ENCODE measurements at regions of chr2 and their contacts with region 1.

Region 1: DNA sequence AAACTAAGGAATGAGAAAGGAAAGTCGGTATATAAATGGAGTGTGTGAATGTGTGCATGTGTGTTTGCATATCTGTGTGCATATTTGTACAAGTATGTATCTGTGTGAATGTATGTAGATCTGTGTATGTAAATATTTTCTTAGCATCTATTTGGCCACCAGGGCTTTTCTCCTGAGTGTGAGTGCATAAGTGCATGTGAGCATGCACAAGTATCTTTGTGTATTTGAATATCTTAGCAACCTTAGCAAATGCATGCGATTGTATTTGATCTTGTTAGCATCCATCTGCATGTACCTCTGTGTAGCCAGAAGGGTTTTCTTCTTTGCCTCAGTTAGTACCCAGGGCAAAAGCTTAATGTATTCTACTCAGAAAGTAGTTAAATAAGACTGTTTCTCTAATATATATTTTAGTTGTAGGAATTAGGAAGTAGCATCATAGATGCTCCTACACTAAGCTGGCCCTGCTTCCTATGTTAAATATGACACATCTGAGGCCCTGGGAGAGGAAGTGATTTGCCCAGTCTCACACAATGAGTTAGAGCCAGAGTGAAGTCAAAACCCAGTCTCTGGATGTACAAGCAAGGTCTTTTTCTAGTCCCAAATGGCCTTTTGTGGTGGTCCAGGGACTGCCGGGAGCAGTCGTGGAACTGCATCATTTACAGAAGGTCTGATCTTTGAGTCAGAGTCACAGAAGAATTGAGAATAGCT is 9.2 kb downstream of the FKBP1B start:
- DNase-seq: no peak
- H3K4me3 ChIP-seq: no peak overlapping the region
- H3K27ac ChIP-seq: no peak overlapping the region
- H3K4me1 ChIP-seq: no peaks in the 10 kb centered on the region
- H3K27me3 ChIP-seq: no peaks in the 10 kb centered on the region
- CTCF ChIP-seq: no peak
- EP300 ChIP-seq: no peak
- POLR2A ChIP-seq: no peak
- RAD21 ChIP-seq: no peak

Region 2: DNA sequence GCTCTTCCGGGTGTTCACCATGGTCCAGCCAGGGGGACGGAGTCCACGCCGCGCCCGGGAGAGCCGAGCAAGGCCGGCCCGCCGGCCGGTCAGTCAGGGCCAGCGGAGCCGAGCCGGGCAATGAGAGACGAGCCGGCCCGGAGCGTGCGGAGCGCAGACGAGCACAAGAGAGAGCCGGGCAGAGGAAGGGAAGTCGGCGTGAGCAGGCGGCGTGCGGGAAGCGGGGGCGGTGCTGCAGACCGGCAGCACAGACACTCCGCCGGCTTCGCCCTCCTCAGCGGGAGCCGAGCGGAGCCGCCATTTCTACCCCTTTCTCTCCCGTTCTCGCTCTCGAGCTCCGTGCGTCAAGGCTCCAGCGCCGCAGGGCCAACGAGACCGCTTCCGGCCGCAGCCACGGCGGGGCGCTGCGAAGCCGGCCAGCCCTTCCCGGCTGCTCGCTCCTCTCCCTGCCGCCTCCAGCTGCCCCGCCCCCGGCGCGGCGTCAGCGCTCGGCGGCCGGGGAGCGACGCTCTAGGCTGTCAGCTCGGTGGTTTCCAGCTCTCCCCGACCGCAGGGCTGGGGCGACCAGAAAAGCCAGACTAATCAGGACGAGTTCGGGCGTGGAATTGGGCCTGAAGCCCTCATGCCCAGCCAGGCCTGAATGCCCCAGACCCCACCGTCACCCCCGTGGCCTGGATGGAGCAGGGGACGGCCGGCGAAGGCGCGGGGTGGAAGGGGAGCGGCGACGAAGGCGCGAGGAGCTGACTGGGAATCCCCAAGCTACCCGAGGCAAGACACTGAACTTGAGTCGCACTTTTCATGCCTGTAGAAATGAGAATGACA is 131.8 kb before region 1 on chr2 and contains the start of gene ATAD2B:
- CTCF ChIA-PET with region 1: interaction called, 8 read pairs
- POLR2A ChIA-PET with region 1: interaction called, 10 read pairs
- DNase-seq: peak; percentile 85 to 97
- H3K4me3 ChIP-seq: peak within 1 kb of the TSS; percentile 69 to 90 (median 82)
- H3K27ac ChIP-seq: peak within 1 kb of the TSS; percentile 87
- H3K4me1 ChIP-seq: peaks cover 0 to 2% (median under 1%) of the 10 kb centered on the region in 4 experiments; a peak in 3 of 7 replicates
- H3K27me3 ChIP-seq: no peaks in the 10 kb centered on the region
- CTCF ChIP-seq: peak; percentile 87 to 96 (median 87)
- EP300 ChIP-seq: 0 out of 3 replicates have a peak, but pooled peaks of 1 of the 2 experiments have one; percentile 80
- POLR2A ChIP-seq: peak; percentile 85 to 94
- RAD21 ChIP-seq: peak; percentile 75 to 83
- total RNA-seq, gene ATAD2B: 15.3 and 16.1 TPM in 2 replicates

Region 3: DNA sequence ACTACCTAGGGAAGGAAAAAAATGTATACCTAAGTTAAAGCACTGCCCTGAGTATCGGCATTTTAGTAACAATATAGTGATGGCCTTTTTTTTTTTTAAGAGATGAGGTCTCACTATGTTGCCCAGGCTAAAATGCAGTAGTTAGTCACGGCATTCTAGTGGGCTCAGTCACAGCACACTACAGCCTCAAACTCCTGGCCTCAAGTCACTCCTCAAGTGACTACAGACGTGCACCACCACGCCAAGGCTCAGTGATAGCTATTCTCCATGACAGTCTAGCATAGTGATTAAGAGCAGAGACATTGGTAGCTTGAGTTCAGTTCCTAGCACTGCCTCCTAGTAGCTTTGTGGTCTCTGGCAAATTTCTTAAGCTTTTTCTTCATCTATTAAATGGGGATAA is 90.9 kb before region 1 on chr2:
- CTCF ChIA-PET with region 1: no interaction called
- POLR2A ChIA-PET with region 1: no interaction called
- DNase-seq: no peak
- H3K4me3 ChIP-seq: no peak overlapping the region
- H3K27ac ChIP-seq: no peak overlapping the region
- H3K4me1 ChIP-seq: no peaks in the 10 kb centered on the region
- H3K27me3 ChIP-seq: no peaks in the 10 kb centered on the region
- CTCF ChIP-seq: no peak
- EP300 ChIP-seq: no peak
- POLR2A ChIP-seq: no peak
- RAD21 ChIP-seq: no peak

Region 4: GRCh38 chr2:24021193-24021998 is 37.3 kb before region 1 on chr2:
- CTCF ChIA-PET with region 1: interaction called, 31 read pairs
- POLR2A ChIA-PET with region 1: interaction called, 8 read pairs
- DNase-seq: peak; percentile 43 to 83
- H3K4me3 ChIP-seq: no peak overlapping the region
- H3K27ac ChIP-seq: no peak overlapping the region
- H3K4me1 ChIP-seq: peaks cover 11 to 38% (median 18%) of the 10 kb centered on the region in 4 experiments
- H3K27me3 ChIP-seq: no peaks in the 10 kb centered on the region
- CTCF ChIP-seq: peak in 2 of 3 experiments; percentile 85 to 93; a peak in 3 of 4 replicates
- EP300 ChIP-seq: no peak
- POLR2A ChIP-seq: peak in 1 of 2 experiments; percentile 18; a peak in 1 of 3 replicates
- RAD21 ChIP-seq: peak; percentile 93 to 95

Region 5: GRCh38 chr2:24040531-24040930 is 18.2 kb before region 1 on chr2:
- CTCF ChIA-PET with region 1: interaction called, 23 read pairs
- POLR2A ChIA-PET with region 1: no interaction called
- DNase-seq: no peak
- H3K4me3 ChIP-seq: no peak overlapping the region
- H3K27ac ChIP-seq: no peak overlapping the region
- H3K4me1 ChIP-seq: no peaks in the 10 kb centered on the region
- H3K27me3 ChIP-seq: no peaks in the 10 kb centered on the region
- CTCF ChIP-seq: no peak
- EP300 ChIP-seq: no peak
- POLR2A ChIP-seq: no peak
- RAD21 ChIP-seq: no peak

Region 6: DNA sequence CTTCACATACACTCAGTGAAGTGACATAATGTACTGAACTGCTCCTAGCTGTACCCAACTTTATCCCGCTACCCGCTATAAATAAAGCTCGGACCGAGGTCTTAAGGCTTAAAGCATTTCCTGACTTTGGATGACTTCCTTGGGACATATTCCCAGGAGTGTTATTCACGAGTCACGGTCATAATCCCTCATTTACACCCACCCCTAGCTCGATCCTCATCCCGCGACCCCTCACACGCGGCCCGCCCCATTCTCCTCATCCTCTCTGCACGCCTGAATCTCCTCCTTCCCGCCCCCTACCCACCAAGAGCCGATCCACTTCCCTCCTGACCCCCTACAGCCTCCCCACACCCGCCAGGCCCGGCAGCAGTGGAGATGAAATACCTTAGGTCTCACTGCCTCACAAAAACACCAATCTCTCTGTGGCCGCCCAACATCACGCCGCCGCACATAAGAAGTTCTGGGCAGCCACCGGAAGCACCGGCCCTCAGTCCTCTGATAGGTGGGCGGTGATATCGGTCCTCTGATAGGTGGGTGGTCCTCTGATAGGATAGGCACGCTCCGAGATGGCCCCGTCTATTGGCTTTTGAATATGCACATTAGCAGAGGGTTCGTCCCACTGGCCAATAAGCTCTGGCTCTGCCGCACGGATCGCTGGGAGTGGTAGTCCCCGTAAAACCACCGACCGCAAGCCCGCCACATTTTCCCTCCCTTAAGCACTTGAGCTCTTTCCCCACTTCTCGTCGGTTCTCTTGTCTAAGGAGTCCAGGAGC is 11.6 kb before region 1 on chr2 and contains the start of gene WDCP:
- CTCF ChIA-PET with region 1: interaction called, 27 read pairs
- POLR2A ChIA-PET with region 1: interaction called, 13 read pairs
- DNase-seq: peak; percentile 82 to 94
- H3K4me3 ChIP-seq: peak within 1 kb of the TSS; percentile 73 to 95 (median 84)
- H3K27ac ChIP-seq: peak within 1 kb of the TSS; percentile 53; the same call in 1 of the 2 replicates
- H3K4me1 ChIP-seq: peaks cover 5 to 12% (median 6%) of the 10 kb centered on the region in 4 experiments; a peak in 5 of 7 replicates
- H3K27me3 ChIP-seq: no peaks in the 10 kb centered on the region
- CTCF ChIP-seq: no peak
- EP300 ChIP-seq: no peak
- POLR2A ChIP-seq: peak; percentile 49 to 88
- RAD21 ChIP-seq: no peak
- total RNA-seq, gene WDCP: 37.6 and 40.1 TPM in 2 replicates

Region 7: DNA sequence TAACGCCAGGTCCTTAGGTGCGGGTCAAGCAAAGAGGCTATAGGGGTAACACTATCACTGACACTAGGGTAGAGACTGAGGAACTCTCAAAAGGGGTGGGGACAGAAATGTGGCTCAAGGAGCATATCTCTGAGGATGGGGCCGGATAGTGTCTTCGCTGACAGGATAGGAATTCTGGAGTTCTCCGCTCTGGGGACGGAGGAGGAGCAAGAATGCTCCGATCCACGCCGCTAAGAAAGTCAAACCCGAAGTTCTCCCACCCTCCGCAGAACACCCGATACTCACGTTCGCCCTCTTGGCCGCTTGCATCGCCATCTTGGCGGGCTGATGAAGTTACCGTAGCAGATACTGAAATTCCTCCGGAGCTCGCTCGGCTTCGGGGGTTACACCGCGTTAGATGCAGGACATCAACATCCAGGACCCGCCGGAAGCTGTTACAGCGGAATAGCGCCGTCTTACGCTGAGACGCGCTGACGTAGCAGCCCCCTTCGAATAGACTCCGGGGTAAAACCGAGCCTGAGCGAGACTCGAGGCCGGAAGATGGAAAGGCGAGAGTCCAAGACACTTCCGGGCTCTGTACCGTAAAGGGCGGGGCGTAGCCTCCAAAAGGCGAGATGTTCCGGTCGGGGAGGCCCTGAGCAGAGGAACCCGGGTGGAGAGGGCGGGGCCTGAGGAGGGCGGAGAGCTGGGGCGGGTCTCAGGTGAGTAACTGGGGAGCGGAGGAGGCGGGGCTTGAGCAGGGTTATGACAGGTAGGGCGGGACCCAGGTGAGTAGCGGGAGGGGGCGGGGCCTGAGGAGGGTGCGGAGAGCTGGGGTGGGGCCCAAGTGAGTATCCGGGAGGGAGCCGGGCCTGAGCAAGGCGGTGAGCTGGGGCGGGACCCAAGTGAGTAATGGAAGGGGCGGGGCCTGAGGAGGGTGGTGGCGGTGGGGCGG is 17.5 kb after region 1 on chr2 and contains the start of gene SF3B6:
- CTCF ChIA-PET with region 1: interaction called, 14 read pairs
- POLR2A ChIA-PET with region 1: interaction called, 10 read pairs
- DNase-seq: peak; percentile 100
- H3K4me3 ChIP-seq: peak within 1 kb of the TSS; percentile 74 to 96 (median 94)
- H3K27ac ChIP-seq: peak within 1 kb of the TSS; percentile 87
- H3K4me1 ChIP-seq: peaks cover 0 to 7% (median 2%) of the 10 kb centered on the region in 4 experiments; a peak in 4 of 7 replicates
- H3K27me3 ChIP-seq: no peaks in the 10 kb centered on the region
- CTCF ChIP-seq: no peak
- EP300 ChIP-seq: peak in 1 of 2 experiments; percentile 85; a peak in 1 of 3 replicates
- POLR2A ChIP-seq: peak in 1 of 2 experiments; percentile 89; a peak in 2 of 3 replicates
- RAD21 ChIP-seq: peak in 1 of 2 experiments; percentile 17; a peak in 2 of 4 replicates
- total RNA-seq, gene SF3B6: 126 and 127 TPM in 2 replicates

Region 8: DNA sequence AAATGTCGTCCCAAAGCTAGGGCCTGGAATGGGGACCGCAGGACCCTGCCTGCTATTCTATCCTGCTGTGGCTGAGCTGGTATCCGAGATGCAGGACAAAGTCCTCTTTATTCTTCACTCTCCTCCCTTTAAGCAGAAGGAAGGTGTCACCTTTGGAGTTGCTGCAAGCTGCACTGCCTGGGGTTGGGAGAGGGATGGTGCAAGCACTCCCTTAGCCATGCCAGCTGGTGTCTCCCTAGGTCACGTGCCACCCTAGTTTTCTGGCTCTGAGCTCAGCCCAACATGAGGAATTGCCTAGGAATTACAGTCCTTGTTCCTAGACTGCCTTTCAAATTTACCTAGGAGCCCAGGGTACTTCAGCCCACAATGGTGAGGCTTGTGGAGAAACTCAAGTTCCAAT is 94.8 kb after region 1 on chr2:
- CTCF ChIA-PET with region 1: no interaction called
- POLR2A ChIA-PET with region 1: no interaction called
- DNase-seq: no peak
- H3K4me3 ChIP-seq: no peak overlapping the region
- H3K27ac ChIP-seq: no peak overlapping the region
- H3K4me1 ChIP-seq: no peaks in the 10 kb centered on the region
- H3K27me3 ChIP-seq: no peaks in the 10 kb centered on the region
- CTCF ChIP-seq: no peak
- EP300 ChIP-seq: no peak
- POLR2A ChIP-seq: no peak
- RAD21 ChIP-seq: no peak

Region 9: DNA sequence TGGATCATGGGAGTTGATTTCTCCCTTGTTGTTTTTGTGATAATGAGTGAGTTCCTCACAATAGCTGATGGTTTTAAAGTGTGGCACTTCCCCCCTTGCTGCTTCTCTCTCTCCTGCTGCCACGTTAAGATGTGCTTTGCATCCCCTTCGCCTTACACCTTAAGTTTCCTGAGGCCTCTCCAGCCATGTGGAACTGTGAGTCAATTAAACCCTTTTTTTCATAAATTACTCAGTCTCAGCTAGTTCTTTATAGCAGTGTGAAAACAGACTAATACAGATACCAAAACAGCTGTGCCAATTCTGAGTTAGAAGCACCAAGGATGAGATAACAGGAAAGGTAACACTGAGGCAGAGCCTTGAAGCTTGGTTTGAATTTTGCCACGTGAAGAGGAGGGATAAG is 257.0 kb after region 1 on chr2:
- CTCF ChIA-PET with region 1: no interaction called
- POLR2A ChIA-PET with region 1: no interaction called
- DNase-seq: no peak
- H3K4me3 ChIP-seq: no peak overlapping the region
- H3K27ac ChIP-seq: no peak overlapping the region
- H3K4me1 ChIP-seq: no peaks in the 10 kb centered on the region
- H3K27me3 ChIP-seq: no peaks in the 10 kb centered on the region
- CTCF ChIP-seq: no peak
- EP300 ChIP-seq: no peak
- POLR2A ChIP-seq: no peak
- RAD21 ChIP-seq: no peak

Region 10: GRCh38 chr2:24721470-24721869 is 662.8 kb after region 1 on chr2:
- CTCF ChIA-PET with region 1: no interaction called
- POLR2A ChIA-PET with region 1: no interaction called
- DNase-seq: no peak
- H3K4me3 ChIP-seq: no peak overlapping the region
- H3K27ac ChIP-seq: no peak overlapping the region
- H3K4me1 ChIP-seq: no peaks in the 10 kb centered on the region
- H3K27me3 ChIP-seq: no peaks in the 10 kb centered on the region
- CTCF ChIP-seq: no peak
- EP300 ChIP-seq: no peak
- POLR2A ChIP-seq: no peak
- RAD21 ChIP-seq: no peak